ENCODE measurements at regions of chr20 and their contacts with region 1.

Region 1: GRCh38 chr20:23622839-23623343 is 14.9 kb downstream of the CST3 start:
- DNase-seq: peak; percentile 94
- H3K4me3 ChIP-seq: peak overlapping the region; percentile 33 to 46 (median 38)
- H3K27ac ChIP-seq: peak overlapping the region; percentile 81 to 88 (median 88)
- H3K4me1 ChIP-seq: peaks cover 17 to 50% (median 37%) of the 10 kb centered on the region in 4 donors
- H3K27me3 ChIP-seq: no peaks in the 10 kb centered on the region
- CTCF ChIP-seq: no peak
- EP300 ChIP-seq: peak; percentile 97
- POLR2A ChIP-seq: no peak

Region 2: GRCh38 chr20:23200918-23201317 is 422.0 kb before region 1 on chr20:
- intact Hi-C with region 1: no loop called
- DNase-seq: no peak
- H3K4me3 ChIP-seq: no peak overlapping the region
- H3K27ac ChIP-seq: no peak overlapping the region
- H3K4me1 ChIP-seq: peaks cover 13 to 31% (median 18%) of the 10 kb centered on the region in 4 donors
- H3K27me3 ChIP-seq: no peaks in the 10 kb centered on the region
- CTCF ChIP-seq: peak in 1 of 3 experiments; percentile 27
- EP300 ChIP-seq: no peak
- POLR2A ChIP-seq: no peak

Region 3: GRCh38 chr20:23857962-23858565 is 235.2 kb after region 1 on chr20:
- intact Hi-C with region 1: no loop called
- DNase-seq: no peak
- H3K4me3 ChIP-seq: no peak overlapping the region
- H3K27ac ChIP-seq: peak overlapping the region in 3 of 4 donors; percentile 14 to 51 (median 28)
- H3K4me1 ChIP-seq: peaks cover 0 to 35% (median 24%) of the 10 kb centered on the region in 4 donors
- H3K27me3 ChIP-seq: no peaks in the 10 kb centered on the region
- CTCF ChIP-seq: no peak
- EP300 ChIP-seq: no peak
- POLR2A ChIP-seq: no peak

Region 4: DNA sequence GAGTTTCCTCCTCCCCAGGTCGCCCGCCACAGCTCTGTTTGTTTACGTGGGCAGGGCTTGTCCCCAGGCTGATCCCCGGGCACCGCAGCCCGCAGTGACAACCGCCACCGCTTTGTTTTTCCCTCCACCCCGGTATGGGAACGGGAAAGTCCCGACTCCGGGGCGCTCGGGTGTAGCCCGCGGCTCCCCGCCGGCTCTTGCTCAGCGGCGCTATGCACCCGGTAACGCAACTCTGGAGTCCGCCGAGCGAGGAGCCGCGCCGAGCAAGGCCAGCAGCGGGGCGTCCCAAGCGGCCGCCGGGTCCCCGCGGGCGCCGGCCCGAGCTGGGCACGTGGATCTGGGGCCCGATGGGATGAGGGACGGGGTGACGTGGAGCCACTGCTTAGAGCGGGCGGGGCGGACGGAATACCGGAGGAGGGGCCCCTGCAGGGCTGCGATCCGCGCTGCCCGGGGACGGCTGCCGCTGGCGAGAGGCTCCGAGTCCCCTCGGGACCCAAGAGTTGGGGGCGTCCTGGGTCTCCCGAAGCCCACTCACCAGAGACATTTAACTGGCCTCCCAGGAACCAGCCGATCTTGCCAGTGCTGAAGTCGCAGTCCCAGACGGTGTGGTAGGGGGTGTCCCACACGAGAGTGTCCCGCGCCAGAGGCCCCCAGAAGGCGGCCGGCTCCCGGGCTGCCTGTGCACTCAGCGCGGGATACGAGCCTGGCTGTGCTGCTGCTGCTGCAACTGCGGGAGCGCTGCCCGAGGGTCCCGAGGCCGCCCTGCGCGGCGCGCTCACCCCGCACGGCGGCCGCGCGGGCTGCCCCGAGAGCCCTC is 1434.6 kb after region 1 on chr20:
- intact Hi-C with region 1: loop called (anchors 10 kb)
- DNase-seq: no peak
- H3K4me3 ChIP-seq: peak overlapping the region; percentile 85 to 95 (median 89)
- H3K27ac ChIP-seq: peak overlapping the region; percentile 96 to 98 (median 97)
- H3K4me1 ChIP-seq: peaks cover 57 to 69% (median 61%) of the 10 kb centered on the region in 4 donors
- H3K27me3 ChIP-seq: no peaks in the 10 kb centered on the region
- CTCF ChIP-seq: no peak
- EP300 ChIP-seq: no peak
- POLR2A ChIP-seq: peak; percentile 48